GM10248 (cell line): ENCODE measurements at regions of chr5 and their contacts with region 1.

Region 1: GRCh38 chr5:149254506-149254905 is 17.2 kb upstream of the AFAP1L1 start:
- DNase-seq: no peak
- CTCF ChIP-seq: no peak

Region 2: DNA sequence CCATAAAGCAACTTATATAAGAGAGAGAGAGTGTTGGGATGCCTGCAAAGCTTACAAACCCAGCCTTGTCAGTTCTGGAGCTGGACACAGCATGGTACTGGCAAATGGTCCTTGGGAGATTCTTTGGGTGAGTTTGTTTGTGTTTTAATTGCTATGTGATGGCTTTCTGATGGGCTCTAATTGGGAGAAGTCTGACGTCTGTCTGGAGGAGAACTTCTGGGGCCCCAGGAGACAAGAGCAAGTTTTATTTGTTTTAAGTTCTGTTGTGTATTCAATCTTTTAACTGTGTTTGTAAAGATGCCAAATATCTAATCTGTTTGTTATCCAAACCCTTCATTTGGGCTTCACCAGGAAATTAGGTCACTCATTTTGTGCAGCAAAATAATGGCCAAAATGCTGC is 33.2 kb before region 1 on chr5:
- CTCF ChIA-PET with region 1: no interaction called
- POLR2A ChIA-PET with region 1: no interaction called
- DNase-seq: no peak
- CTCF ChIP-seq: no peak

Region 3: DNA sequence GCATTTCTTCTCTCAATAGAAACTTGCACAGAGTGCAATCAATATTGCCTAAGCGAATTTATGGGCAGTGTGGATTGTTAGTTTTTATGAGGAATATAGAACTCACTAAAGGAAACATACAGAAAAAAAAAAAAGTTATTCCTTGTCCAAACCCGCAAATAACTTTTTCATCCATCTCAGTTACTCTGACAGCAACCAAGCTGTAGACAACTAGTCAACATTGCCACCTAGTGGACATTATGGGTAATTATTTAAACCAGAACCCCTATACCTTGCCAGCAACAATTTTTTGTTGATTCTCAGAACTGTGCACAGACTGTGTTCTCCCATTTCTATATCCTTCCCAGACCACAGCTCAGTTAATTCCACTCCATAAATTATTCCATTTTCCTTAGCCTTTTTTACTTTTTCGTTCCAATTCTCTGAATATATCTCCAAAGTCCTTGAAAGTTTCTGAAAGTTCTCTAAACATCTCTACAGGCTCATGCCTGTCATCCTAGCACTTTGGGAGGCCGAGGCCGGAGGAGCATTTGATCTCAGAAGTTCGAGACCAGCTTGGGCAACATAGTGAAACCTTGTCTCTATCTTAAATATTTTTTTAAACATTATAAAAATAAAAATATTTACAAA is 14.5 kb after region 1 on chr5:
- CTCF ChIA-PET with region 1: interaction called, 12 read pairs
- POLR2A ChIA-PET with region 1: no interaction called
- DNase-seq: peak; percentile 71
- CTCF ChIP-seq: peak; percentile 39